ENCODE measurements at regions of chr19 and their contacts with region 1.

Region 1: GRCh38 chr19:8580710-8581281 is 3.6 kb upstream of the MYO1F start:
- DNase-seq: peak; percentile 86
- CTCF ChIP-seq: peak; percentile 100

Region 2: GRCh38 chr19:8329996-8330395 is 250.8 kb before region 1 on chr19:
- CTCF ChIA-PET with region 1: no interaction called
- POLR2A ChIA-PET with region 1: no interaction called
- DNase-seq: no peak
- CTCF ChIP-seq: no peak

Region 3: DNA sequence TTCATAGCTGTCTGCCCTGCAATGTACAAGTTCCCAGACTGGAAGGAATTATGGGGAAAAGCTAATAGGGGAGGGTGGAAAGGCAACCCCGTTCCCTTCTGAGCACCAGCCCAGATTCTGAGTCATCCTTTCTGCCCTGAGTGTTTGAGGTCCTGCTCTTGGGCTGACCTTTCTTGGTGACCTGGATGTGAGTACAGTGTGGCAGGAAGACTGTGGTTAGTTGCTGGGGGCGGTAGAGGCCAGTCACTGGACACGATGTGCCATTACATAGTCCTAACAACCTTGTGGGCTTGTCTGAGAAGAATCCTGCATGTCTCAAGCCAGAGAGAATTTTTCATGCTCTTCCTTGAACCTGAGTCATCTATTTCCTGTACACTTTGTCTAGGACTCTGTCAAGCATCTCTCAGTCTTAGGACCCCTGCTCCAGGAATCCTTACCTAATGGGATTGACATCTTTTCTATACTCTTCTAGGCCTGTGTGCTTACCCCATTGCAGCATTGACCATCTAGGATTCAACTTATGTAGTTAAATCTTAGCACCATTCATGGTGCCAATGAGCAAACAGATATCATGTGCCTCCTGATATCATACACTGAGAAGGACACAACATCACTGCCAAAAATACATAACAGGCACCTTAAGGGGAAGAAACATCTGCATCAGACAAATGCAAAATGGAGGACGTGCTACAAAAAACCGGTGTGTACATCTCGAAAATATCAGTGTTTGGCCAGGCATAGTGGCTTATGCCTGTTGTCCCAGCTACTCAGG is 225.0 kb before region 1 on chr19:
- CTCF ChIA-PET with region 1: interaction called, 72 read pairs
- POLR2A ChIA-PET with region 1: interaction called, 4 read pairs
- DNase-seq: no peak
- CTCF ChIP-seq: no peak

Region 4: DNA sequence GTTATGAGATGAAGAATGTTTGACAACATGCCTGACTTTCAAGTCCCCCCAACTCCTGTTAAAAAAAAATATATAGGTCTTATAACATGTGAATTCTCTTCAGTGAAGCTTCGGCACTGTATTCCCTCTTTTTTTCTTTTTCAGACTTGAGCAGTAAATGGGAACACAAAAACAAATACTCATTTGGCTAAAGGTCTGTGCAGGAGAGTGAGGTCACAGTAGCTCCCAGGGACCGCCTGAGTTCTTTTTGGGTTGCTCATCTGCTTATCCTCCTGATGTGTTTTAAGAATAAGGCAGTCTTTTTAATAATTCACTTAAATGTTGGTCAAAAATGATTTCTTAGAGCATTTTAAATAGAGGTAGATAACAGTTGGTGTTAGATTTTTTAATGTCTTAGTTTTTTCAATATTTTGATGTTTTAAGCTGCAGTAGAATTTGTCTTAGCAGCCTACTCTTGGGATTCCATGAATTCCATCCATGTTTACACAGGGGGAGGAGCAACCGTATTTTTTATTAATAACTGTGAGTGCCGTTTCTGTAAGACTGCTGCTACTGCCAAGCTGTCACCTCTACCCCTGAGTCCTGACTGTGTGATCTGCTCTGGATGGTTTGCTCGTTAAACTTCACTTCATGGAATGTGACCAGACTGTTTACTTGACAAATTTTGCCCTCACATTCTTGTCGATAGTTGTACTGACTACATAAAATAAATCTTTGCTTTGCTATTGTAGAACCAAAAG is 121.1 kb before region 1 on chr19:
- CTCF ChIA-PET with region 1: no interaction called
- POLR2A ChIA-PET with region 1: no interaction called
- DNase-seq: no peak
- CTCF ChIP-seq: no peak

Region 5: DNA sequence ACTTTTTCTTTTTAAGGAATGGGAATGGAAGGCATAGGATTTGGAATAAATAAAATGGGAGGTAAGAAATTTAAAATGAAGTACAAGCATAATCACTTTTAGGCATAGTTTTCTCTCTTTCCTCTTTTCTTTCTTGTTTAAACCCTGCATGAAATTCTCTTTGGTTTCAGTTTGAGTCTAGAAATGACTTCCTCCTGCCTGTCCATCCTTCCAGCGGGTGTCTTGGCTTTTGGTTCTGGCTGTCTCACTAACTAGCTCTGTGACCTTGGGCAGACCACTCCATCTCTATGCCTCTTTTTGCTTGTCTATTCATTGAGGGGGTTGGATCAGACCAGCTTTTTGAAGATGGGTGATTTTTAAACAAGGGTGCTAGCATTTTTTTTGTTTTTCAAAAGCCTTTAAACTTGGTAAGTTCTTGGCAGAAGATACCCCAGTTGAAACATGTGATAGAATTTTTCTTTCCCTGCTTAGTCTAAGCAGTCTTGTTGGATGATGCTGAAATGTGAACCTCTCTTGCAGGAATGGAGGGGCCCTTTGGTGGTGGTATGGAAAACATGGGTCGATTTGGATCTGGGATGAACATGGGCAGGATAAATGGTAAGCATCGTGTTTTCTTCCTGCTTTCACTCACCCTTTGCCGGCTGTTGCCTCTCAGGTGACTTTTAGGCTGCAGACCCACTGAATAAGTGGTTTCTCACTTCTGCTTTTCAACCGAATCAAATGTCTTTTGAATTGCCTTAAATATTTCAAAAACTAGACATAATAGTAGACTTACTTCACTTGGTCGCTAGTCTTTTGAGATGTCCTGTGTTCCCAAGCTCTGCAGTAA is 106.9 kb before region 1 on chr19:
- CTCF ChIA-PET with region 1: no interaction called
- POLR2A ChIA-PET with region 1: no interaction called
- DNase-seq: peak; percentile 73
- CTCF ChIP-seq: no peak

Region 6: DNA sequence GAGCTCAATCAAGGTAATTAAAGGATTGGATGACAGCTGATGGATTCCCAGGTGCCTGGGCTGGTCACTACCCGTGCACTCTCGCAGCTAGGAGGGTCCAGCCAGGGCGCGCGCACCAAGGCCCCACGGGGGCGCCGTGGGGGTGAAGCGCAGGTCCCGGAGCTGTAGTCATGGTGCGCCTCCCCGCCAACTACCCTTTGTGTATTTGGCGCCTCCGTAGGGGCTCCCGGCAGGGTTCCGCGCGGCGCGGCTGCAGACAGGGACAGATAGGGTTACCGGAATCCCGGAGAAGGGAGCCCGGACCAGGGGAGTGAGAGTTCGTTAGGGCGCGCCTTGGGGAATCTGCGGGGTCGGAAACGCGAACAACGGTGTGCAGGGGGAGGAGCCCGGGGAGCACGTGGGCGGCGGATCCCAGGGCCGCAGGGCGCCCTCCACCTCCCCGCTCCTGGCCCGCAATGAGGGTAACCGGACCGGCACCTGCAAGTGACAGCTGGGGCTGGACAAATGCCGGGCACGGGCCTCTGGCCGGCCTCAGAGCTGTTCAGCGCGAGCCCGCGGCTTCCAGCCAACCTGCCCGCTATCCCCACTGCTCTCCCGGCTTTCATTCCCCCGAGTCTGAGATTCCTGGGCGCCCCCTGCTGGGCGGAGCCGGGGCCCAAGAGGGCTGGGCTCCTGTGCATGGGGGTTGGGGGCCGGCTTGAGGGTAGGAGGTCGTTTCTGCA is 75.0 kb before region 1 on chr19:
- CTCF ChIA-PET with region 1: interaction called, 19 read pairs
- POLR2A ChIA-PET with region 1: no interaction called
- DNase-seq: peak; percentile 84
- CTCF ChIP-seq: peak; percentile 87

Region 7: GRCh38 chr19:8525401-8525684 is 55.5 kb before region 1 on chr19:
- CTCF ChIA-PET with region 1: interaction called, 26 read pairs
- POLR2A ChIA-PET with region 1: no interaction called
- DNase-seq: no peak
- CTCF ChIP-seq: no peak

Region 8: DNA sequence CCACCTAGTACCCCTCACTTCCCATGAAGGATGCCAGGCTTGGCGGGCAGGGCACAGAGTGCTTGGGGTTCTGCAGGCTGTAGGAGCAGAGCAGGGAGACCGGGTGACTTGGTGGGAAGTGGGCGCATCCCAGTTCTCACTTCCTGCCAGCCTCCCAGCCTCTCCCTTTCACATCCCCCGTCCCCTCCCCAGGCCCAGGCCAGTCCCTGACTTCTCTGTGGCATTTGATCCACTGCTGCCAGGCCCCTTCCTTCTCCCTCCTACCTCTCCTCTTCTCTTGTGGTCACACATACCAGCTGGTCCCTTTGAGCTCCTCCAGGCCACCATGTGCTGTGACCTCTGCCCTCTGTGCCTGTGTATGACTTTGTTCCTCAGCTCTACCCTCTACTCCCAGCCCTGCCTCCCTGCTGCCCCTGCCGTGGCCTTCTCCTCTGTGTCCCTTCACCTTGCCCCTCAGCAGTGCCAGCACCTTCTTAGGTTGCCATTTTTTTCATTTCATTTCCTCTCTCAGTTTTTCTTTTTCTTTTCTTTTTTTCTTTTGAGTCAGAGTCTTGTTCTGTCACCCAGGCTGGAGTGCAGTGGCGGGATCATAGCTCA is 23.1 kb before region 1 on chr19:
- CTCF ChIA-PET with region 1: interaction called, 34 read pairs
- POLR2A ChIA-PET with region 1: no interaction called
- DNase-seq: no peak
- CTCF ChIP-seq: no peak

Region 9: DNA sequence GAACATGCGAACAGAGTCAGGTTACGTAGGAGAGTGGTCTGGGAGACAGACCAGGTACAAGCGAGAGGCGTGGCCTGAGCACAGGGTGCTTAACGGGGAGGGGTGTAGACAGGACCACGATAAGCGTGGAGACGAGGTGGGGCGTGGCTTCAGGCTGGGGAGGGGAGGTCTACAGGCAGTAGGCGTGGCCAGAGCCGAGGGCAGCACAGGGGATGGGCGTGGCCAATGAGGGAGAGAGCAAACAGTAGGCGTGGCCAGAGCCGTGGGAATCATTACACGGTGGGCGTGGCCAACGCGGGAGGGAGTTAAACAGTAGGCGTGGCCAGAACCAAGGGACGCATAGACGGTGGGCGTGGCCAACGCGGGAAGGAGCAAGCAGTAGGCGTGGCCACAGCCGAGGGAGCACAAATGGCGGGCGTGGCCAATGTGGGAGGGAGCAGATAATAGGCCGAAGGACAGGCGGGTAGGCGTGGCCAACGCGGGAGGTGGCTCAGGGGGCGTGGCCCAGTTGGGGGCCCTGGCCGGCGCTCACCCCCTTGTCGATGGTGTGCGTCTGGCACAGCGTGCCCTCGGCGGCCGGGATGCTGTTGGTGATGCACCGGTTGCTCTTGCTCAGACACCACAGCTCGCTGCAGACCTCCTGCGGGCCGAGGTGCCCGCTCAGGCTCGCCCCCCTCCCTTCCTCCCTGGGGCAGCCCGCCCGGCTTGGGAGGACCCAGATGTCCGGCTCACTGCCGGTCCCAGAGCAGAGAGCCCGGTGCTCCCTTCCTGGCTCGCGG is 11.6 kb after region 1 on chr19:
- CTCF ChIA-PET with region 1: interaction called, 67 read pairs
- POLR2A ChIA-PET with region 1: no interaction called
- DNase-seq: peak; percentile 26
- CTCF ChIP-seq: no peak

Region 10: GRCh38 chr19:8666814-8667405 is 86.1 kb after region 1 on chr19:
- CTCF ChIA-PET with region 1: no interaction called
- POLR2A ChIA-PET with region 1: no interaction called
- DNase-seq: no peak
- CTCF ChIP-seq: no peak

Region 11: DNA sequence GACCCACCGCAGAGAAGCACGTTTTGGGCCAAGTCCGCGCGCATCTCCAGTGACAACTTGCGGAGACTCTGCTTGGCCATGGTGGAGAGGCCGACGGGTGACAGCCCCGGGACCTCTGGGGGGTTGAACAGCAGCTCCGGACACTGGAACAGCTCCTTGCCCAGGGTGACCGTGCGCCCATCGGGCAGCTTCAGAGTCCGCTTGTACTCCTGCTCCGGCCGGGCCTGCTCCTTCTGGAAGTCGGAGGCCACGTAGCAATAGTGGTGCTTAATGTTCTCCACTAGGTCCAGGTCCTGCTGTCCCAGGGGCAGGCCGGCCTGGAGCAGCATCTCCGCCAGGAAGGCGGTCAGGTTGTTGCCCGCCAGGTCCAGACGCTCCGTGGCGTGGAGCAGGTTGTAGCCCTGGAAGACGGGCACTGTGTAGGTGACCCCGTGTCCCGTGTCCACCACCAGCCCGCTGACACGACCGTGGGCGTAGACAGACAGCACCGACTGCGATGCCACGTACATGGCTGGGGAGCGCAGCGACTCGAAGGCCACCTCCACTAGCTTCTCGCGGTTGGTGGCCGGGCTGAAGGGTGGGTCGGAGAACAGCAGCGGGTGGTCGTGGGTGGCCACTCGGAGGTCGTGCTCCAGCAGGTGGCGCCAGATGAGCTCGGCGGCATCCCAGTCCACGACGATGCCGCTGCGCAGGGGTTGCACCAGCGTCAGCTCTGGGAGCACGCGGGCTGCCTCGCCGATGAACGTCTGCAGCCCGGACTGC is 117.1 kb after region 1 on chr19:
- CTCF ChIA-PET with region 1: interaction called, 32 read pairs
- POLR2A ChIA-PET with region 1: no interaction called
- DNase-seq: no peak
- CTCF ChIP-seq: no peak